ENCODE measurements at regions of chr1 and their contacts with region 1.

Region 1: DNA sequence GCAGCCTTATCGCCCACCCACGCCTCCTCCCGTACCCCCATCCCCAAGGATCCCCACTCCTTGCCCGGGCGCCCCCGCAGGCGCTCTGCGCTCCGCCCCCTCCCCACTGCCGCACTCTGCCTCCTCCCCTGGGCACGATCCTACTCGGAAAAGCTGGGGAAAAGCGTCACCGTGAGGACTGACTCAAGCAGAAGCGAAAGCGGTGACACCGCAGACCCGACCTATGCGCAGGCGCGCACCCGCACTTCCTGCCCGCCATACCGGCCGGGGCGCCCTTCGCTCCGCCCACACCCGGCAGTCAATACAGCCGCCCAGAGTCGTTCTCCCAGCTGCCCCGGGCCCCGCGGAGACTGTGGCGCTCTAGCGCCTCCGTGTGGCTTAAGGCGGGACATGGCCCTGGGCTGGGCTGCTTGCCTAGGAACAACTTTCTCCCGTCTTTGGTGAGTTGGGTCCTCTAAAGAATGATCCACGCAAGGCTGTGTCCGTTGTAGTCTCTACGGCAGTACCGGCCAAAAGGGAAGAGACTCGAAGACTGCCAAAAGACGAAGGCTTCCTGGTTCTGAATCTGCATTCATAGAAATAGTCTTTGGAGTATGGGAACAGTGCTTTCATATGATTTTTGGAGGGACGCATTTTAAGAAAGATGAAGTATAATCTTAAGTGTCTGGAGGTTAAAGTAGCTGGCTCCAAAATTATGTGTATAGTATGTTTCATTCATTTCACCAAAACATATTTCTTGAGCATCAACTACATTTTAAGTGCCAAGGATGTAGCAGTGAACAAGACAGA is at the start of gene OMA1:
- DNase-seq: peak; percentile 98
- H3K4me3 Mint-ChIP-seq: peak within 1 kb of the TSS; percentile 90
- H3K27ac Mint-ChIP-seq: peak within 1 kb of the TSS; percentile 95
- H3K4me1 Mint-ChIP-seq: peaks cover 18% of the 10 kb centered on the region
- H3K27me3 Mint-ChIP-seq: no peaks in the 10 kb centered on the region
- total RNA-seq, gene OMA1: 12.0 to 13.0 TPM

Region 2: GRCh38 chr1:56831871-56832693 is 1714.6 kb before region 1 on chr1:
- CTCF ChIA-PET with region 1: no interaction called
- POLR2A ChIA-PET with region 1: no interaction called
- intact Hi-C with region 1: loop called (anchors 2 kb)
- DNase-seq: peak; percentile 76
- H3K4me3 Mint-ChIP-seq: no peak overlapping the region
- H3K27ac Mint-ChIP-seq: no peak overlapping the region
- H3K4me1 Mint-ChIP-seq: peaks cover 4% of the 10 kb centered on the region
- H3K27me3 Mint-ChIP-seq: peaks cover 3% of the 10 kb centered on the region

Region 3: GRCh38 chr1:58528518-58528917 is 18.2 kb before region 1 on chr1:
- CTCF ChIA-PET with region 1: interaction called, 19 read pairs
- POLR2A ChIA-PET with region 1: interaction called, 4 read pairs
- intact Hi-C with region 1: loop called (anchors 1 kb)
- DNase-seq: no peak
- H3K4me3 Mint-ChIP-seq: no peak overlapping the region
- H3K27ac Mint-ChIP-seq: no peak overlapping the region
- H3K4me1 Mint-ChIP-seq: peaks cover 19% of the 10 kb centered on the region
- H3K27me3 Mint-ChIP-seq: no peaks in the 10 kb centered on the region

Region 4: DNA sequence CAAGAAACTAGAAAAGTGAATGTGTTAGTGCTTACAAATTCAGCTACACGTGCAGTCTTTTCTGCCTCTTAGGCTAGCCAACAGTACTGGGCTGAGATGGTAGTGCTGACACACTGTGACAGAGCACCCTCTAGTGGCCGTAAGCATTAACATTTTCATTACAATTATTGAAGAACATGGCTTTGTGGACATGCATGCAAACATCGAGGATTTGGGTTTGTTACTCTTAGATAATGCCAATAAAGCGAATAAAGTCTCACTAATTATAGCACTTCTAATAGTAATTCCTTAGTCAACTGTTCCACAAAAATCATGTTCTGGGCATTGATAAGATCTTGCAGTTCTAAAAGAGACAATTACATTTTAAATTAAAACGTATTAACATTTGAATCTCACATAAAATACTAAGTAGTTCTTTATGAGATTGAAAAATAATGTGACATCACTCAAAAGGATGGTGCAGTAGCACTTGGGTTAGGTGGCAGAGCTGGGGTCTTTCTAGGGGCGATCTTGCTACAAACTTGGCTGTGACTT is 106.0 kb after region 1 on chr1:
- CTCF ChIA-PET with region 1: interaction called, 17 read pairs
- POLR2A ChIA-PET with region 1: no interaction called
- intact Hi-C with region 1: loop called (anchors 1 kb)
- DNase-seq: peak; percentile 58
- H3K4me3 Mint-ChIP-seq: no peak overlapping the region
- H3K27ac Mint-ChIP-seq: no peak overlapping the region
- H3K4me1 Mint-ChIP-seq: peaks cover 11% of the 10 kb centered on the region
- H3K27me3 Mint-ChIP-seq: no peaks in the 10 kb centered on the region

Region 5: DNA sequence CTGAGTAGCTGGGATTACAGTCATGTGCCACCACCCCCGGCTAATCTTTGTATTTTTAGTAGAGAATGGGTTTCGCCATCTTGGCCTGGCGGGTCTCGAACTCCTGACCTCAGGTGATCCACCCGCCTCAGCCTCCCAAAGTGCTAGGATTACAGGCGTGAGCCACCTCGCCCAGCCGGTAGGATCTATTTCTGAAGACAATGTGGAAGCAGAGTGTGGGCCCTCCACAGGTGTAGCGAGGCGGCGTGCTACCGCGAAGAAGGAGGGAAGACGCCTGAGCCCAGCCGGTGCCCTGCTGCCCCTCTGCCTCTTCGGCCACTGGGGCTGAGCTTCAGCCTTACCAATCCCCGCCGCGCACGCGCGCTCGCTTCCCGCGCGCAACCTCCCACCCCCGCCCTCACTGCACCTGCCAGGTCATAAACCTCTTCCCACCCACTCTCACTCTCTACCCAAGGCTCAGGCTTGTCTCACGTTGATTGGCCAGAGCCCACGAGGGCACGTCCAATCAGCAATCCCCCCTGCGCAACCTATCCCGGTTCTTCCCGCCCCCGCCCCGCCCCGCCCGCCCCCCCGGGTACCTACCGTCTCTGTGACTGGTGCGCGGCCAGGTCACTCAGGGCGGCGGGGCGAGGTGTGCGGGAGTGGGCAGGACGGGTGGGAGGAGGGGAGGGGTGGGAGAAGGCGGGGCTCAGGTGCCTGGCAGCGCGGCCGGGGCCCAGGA is 1267.6 kb after region 1 on chr1:
- CTCF ChIA-PET with region 1: no interaction called
- POLR2A ChIA-PET with region 1: no interaction called
- intact Hi-C with region 1: loop called (anchors 10 kb)
- DNase-seq: peak; percentile 92
- H3K4me3 Mint-ChIP-seq: peak overlapping the region; percentile 80
- H3K27ac Mint-ChIP-seq: peak overlapping the region; percentile 75
- H3K4me1 Mint-ChIP-seq: peaks cover 7% of the 10 kb centered on the region
- H3K27me3 Mint-ChIP-seq: peaks cover 5% of the 10 kb centered on the region

Measured in activated CD4-positive, alpha-beta memory T cell treated with anti-CD3 and anti-CD28 coated beads for 36 hours (primary cell).